A673 (cell line): ENCODE measurements at regions of chr7 and their contacts with region 1.

Region 1: DNA sequence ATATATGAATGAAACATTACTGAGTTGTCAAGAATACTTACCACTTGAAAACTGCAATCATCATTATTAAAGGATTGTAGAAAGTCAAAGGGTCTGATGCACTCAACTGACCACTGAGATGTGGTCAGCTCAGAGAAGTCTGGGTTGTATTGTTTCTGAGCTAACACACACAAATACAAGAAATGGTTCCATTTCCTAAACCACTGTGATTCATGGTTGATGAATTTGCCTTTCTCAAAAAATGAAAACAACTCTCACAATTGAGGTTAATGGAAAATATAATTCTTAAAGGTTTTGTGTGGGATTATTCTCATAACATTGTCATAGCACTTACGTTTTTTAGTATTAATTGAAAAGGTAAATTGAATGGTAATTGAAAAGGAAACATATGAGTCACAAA is 45.6 kb upstream of the TAS2R16 start:
- DNase-seq: no peak
- H3K4me3 ChIP-seq: no peak overlapping the region
- H3K27ac ChIP-seq: no peak overlapping the region
- H3K4me1 ChIP-seq: peaks cover 17% of the 10 kb centered on the region
- H3K27me3 ChIP-seq: no peaks in the 10 kb centered on the region
- CTCF ChIP-seq: no peak

Region 2: DNA sequence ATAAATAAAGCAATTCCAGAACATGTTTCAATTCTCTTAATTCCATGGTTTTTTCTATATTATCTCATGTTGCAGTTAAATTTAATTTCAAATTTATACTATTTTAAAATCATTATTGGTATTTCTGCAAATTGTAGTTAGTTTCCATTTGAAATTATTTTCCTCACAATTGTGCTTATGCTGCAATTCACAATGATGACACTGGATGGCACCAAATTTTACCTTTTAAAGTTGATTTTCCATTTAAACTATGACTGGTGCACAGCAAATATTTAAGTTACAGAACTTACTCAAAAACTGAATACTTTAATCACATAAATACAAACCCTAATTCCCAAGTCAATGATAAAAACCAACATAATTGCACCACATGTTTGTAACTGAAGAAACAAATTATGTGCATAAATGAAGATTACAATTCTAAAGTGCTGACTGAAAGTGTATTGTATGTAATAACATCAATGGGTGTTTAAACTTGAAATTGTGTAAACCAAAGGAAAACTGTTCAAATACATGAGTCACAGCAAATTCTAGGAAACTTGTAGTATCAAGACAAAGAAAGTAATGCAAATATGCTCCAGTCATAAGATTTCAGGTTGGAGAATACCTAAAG is 821.7 kb before region 1 on chr7:
- CTCF ChIA-PET with region 1: no interaction called
- POLR2A ChIA-PET with region 1: no interaction called
- intact Hi-C with region 1: loop called (anchors 5 kb)
- DNase-seq: peak; percentile 62
- H3K4me3 ChIP-seq: no peak overlapping the region
- H3K27ac ChIP-seq: no peak overlapping the region
- H3K4me1 ChIP-seq: peaks cover 8% of the 10 kb centered on the region
- H3K27me3 ChIP-seq: no peaks in the 10 kb centered on the region
- CTCF ChIP-seq: peak; percentile 86

Region 3: DNA sequence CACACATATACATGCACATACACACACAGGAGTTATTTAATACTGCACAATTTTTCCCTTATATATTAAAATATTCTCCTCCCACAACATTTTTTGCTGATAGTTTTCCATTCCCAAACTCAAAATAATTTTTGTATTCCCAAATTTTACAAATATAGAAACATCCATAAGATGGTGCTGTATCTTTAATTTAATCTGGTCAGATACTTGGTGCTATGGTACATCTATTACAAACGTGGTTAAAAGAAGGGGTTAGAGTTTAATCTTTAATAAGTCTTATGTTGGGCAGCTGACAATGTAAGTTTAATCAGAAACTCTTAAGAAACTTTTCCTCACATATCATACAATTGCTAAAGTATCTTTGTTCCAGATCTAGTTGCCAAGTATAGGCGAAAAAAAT is 144.6 kb before region 1 on chr7:
- CTCF ChIA-PET with region 1: no interaction called
- POLR2A ChIA-PET with region 1: no interaction called
- intact Hi-C with region 1: loop called (anchors 1 kb)
- DNase-seq: peak; percentile 52
- H3K4me3 ChIP-seq: no peak overlapping the region
- H3K27ac ChIP-seq: peak overlapping the region; percentile 39
- H3K4me1 ChIP-seq: peaks cover 28% of the 10 kb centered on the region
- H3K27me3 ChIP-seq: no peaks in the 10 kb centered on the region
- CTCF ChIP-seq: peak; percentile 54

Region 4: GRCh38 chr7:122902751-122903495 is 138.2 kb before region 1 on chr7:
- CTCF ChIA-PET with region 1: no interaction called
- POLR2A ChIA-PET with region 1: no interaction called
- intact Hi-C with region 1: loop called (anchors 2 kb)
- DNase-seq: peak; percentile 54
- H3K4me3 ChIP-seq: no peak overlapping the region
- H3K27ac ChIP-seq: no peak overlapping the region
- H3K4me1 ChIP-seq: peaks cover 37% of the 10 kb centered on the region
- H3K27me3 ChIP-seq: no peaks in the 10 kb centered on the region
- CTCF ChIP-seq: peak; percentile 48

Region 5: GRCh38 chr7:122975341-122975740 is 65.8 kb before region 1 on chr7:
- CTCF ChIA-PET with region 1: no interaction called
- POLR2A ChIA-PET with region 1: interaction called, 3 read pairs
- intact Hi-C with region 1: loop called (anchors 1 kb)
- DNase-seq: no peak
- H3K4me3 ChIP-seq: no peak overlapping the region
- H3K27ac ChIP-seq: peak overlapping the region; percentile 35
- H3K4me1 ChIP-seq: peaks cover 36% of the 10 kb centered on the region
- H3K27me3 ChIP-seq: no peaks in the 10 kb centered on the region
- CTCF ChIP-seq: no peak

Region 6: DNA sequence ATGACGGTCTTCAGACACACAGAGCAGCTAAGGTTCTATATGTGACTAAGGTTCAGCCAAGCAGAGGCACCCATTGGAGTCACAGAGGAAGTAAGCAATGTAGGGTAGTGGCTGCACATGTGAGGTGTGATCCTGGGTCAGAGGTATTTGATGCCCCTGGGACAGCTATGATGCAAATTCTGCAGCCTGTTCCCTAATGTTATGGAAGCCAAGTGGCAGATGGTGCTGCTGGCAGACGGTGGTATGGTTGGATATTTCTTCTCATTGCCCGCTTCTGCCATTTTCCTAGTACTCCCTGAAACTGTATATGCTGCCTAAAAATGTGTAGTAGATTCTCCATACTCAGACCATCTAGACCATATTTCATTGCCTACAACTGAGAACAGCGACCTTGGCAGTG is 52.8 kb before region 1 on chr7:
- CTCF ChIA-PET with region 1: interaction called, 10 read pairs
- POLR2A ChIA-PET with region 1: interaction called, 4 read pairs
- intact Hi-C with region 1: no loop called
- DNase-seq: no peak
- H3K4me3 ChIP-seq: no peak overlapping the region
- H3K27ac ChIP-seq: peak overlapping the region; percentile 4
- H3K4me1 ChIP-seq: peaks cover 15% of the 10 kb centered on the region
- H3K27me3 ChIP-seq: no peaks in the 10 kb centered on the region
- CTCF ChIP-seq: no peak

Region 7: DNA sequence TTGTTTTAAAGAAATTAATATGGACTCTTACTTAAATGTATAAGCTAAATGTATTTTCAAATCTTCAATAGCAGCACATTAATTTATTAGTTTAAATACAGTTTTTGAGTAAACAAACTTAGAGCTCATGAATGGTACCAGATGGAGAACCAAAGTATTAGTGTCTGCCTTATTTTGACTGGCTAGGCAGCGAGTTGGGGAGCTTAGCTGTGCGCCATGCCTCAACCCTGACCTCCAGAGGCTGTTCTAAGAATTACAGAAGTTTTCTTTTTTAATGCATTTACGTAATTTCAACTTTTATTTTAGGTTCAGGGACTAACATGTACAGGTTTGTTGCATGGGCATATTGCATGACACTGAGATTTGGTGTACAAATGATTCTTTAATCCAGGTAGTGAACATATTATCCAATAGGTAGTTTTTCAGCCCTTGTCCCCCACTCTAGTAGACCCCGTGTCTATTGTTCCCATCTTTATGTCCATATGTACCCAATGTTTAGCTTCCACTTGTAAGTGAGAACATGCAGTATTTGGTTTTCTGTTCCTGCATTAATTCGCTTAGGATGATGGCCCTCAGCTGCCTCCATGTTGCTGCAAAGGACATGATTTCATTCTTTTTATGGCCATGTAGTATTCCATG is 326.5 kb after region 1 on chr7:
- CTCF ChIA-PET with region 1: no interaction called
- POLR2A ChIA-PET with region 1: no interaction called
- intact Hi-C with region 1: loop called (anchors 2 kb)
- DNase-seq: peak; percentile 76
- H3K4me3 ChIP-seq: no peak overlapping the region
- H3K27ac ChIP-seq: no peak overlapping the region
- H3K4me1 ChIP-seq: peaks cover 8% of the 10 kb centered on the region
- H3K27me3 ChIP-seq: no peaks in the 10 kb centered on the region
- CTCF ChIP-seq: peak; percentile 88